Endothelial cell of umbilical vein (primary cell): ENCODE measurements at regions of chr2 and their contacts with region 1.

Region 1: GRCh38 chr2:176445956-176446355 is 176.7 kb downstream of the MTX2 start:
- DNase-seq: peak; percentile 73
- H3K4me3 ChIP-seq: no peak overlapping the region
- H3K27ac ChIP-seq: peak overlapping the region; percentile 78
- H3K4me1 ChIP-seq: peaks cover 17% of the 10 kb centered on the region
- H3K27me3 ChIP-seq: no peaks in the 10 kb centered on the region
- CTCF ChIP-seq: no peak
- POLR2A ChIP-seq: no peak

Region 2: GRCh38 chr2:176432434-176432833 is 13.5 kb before region 1 on chr2:
- CTCF ChIA-PET with region 1: interaction called, 12 read pairs
- POLR2A ChIA-PET with region 1: no interaction called
- dilution Hi-C with region 1: no loop called
- intact Hi-C with region 1: no loop called
- DNase-seq: peak; percentile 12
- H3K4me3 ChIP-seq: no peak overlapping the region
- H3K27ac ChIP-seq: no peak overlapping the region
- H3K4me1 ChIP-seq: no peaks in the 10 kb centered on the region
- H3K27me3 ChIP-seq: no peaks in the 10 kb centered on the region
- CTCF ChIP-seq: no peak
- POLR2A ChIP-seq: no peak